Activated CD4-positive, alpha-beta T cell treated with anti-CD3 and anti-CD28 coated beads for 36 hours (primary cell): ENCODE measurements at regions of chr14 and their contacts with region 1.

Region 1: DNA sequence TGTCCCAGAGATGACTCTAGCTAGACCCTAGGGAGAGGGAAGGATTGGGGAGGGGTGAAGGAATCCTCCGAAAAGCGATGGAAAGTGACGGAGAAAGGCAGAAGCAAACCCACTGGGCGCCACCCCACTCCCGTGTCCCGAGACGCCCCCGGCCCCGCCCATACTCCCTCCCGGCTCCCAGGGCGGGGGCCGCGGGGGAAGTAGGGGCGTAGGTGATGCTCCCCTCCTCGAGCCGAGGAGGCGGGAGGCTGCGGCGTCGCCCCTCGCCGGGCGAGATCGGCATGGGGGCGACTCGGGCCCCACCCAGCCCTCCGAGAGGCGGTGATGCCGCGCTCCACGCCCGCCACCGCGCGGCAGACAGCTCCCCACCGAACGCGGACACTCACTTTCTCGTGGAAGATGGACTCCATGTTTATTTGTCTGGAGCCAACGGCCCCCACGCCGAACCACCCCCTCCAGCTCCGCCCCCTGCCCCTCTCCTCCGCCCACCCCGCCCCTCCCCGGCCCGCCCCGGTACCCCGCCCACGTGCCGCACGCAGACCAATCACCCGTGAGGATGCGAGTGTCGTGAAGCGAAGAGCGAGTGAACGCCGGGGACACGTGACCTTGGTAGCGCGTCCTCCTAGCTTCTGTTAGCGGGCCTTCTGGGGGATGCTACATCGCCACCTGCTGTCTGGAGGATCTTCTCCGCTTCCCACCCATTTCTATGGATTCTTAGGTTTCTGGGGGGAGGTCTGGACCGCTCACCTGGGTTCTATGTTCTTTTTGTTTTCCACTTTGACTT is at the start of gene ATXN3:
- DNase-seq: peak; percentile 98
- ATAC-seq: peak; percentile 97
- H3K4me3 Mint-ChIP-seq: peak within 1 kb of the TSS; percentile 90
- H3K27ac Mint-ChIP-seq: peak within 1 kb of the TSS; percentile 92
- H3K4me1 Mint-ChIP-seq: peaks cover 42% of the 10 kb centered on the region
- H3K27me3 Mint-ChIP-seq: no peaks in the 10 kb centered on the region
- total RNA-seq, gene ATXN3: 32.7 to 36.0 TPM

Region 2: DNA sequence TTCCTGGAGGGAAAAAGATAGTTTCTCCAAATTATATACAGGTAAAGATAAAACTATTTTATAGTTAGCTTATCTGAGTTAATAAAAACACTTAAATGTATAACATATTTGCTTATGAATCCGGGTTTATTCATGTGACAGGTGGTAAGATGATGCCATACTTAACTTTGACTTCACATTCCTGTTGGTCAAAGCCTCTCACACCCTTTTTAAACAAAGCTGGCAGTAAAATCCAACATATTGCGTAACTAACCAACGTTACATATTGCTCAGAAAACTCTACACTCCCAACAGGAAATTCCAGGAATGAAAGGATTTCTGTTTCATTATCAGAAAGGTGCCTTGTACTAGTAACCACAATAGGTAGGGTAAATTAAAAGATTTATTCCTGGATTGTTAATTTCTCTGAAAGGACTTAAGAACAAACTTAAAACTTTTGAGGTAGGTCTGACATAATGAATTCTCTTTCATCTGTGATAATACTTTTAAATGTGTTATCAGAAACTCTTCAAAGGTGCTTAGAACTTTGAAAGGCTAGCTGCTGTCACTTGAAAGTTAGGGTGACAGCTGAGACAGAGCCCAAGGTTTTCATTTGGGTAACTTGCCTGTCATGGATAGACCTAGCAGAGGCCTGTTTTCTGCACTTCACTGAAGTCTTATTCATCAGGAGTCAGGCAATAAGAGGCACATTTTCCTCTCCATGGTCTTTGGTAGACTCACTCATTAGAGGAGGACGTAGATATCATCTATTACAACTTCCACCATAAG is 350.6 kb before region 1 on chr14:
- CTCF ChIA-PET with region 1: no interaction called
- POLR2A ChIA-PET with region 1: no interaction called
- intact Hi-C with region 1: no loop called
- DNase-seq: no peak
- ATAC-seq: no peak
- H3K4me3 Mint-ChIP-seq: no peak overlapping the region
- H3K27ac Mint-ChIP-seq: no peak overlapping the region
- H3K4me1 Mint-ChIP-seq: no peaks in the 10 kb centered on the region
- H3K27me3 Mint-ChIP-seq: no peaks in the 10 kb centered on the region

Region 3: DNA sequence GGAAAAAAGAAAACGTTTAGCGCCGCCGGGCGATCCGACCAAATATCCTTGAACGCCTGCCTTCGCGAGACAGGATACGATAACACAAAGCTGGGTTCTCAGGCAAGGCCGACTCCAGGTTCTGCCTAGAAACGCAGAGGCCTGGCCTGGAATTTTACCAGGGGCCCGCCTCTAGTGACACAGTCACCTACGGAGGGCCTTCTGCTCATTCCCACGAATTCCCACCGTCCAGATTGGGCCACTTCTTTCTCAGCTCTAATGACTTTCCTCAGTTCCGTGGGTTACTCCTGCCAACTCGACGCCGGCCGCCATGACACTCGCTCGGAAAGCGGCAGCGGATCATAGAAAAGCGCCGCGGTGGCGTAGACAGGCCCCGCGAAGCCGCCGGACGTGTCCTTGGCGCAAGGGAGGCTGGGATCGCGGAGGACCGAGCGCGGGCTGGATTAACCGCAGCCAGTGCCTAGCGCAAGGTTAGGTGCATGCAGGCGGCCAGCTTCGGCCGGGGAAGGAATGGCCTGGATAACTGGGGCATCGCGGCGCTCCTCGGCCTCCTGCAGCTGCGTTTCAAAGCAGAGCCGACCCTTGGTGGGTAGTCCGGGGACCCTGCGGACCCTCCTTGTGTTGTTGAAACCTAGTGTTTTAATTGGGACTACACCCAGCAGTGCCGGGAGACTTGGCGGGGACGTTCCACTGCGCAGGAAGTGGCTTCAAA is 66.5 kb before region 1 on chr14 and contains the start of gene TRIP11:
- CTCF ChIA-PET with region 1: interaction called, 5 read pairs
- POLR2A ChIA-PET with region 1: interaction called, 8 read pairs
- intact Hi-C with region 1: loop called (anchors 1 kb)
- DNase-seq: peak; percentile 98
- ATAC-seq: peak; percentile 95
- H3K4me3 Mint-ChIP-seq: peak within 1 kb of the TSS; percentile 92
- H3K27ac Mint-ChIP-seq: peak within 1 kb of the TSS; percentile 98
- H3K4me1 Mint-ChIP-seq: peaks cover 42% of the 10 kb centered on the region
- H3K27me3 Mint-ChIP-seq: no peaks in the 10 kb centered on the region
- total RNA-seq, gene TRIP11: 35.7 to 41.0 TPM

Region 4: GRCh38 chr14:92190768-92191167 is 84.4 kb after region 1 on chr14:
- CTCF ChIA-PET with region 1: no interaction called
- POLR2A ChIA-PET with region 1: no interaction called
- intact Hi-C with region 1: no loop called
- DNase-seq: no peak
- ATAC-seq: no peak
- H3K4me3 Mint-ChIP-seq: no peak overlapping the region
- H3K27ac Mint-ChIP-seq: no peak overlapping the region
- H3K4me1 Mint-ChIP-seq: no peaks in the 10 kb centered on the region
- H3K27me3 Mint-ChIP-seq: no peaks in the 10 kb centered on the region

Region 5: DNA sequence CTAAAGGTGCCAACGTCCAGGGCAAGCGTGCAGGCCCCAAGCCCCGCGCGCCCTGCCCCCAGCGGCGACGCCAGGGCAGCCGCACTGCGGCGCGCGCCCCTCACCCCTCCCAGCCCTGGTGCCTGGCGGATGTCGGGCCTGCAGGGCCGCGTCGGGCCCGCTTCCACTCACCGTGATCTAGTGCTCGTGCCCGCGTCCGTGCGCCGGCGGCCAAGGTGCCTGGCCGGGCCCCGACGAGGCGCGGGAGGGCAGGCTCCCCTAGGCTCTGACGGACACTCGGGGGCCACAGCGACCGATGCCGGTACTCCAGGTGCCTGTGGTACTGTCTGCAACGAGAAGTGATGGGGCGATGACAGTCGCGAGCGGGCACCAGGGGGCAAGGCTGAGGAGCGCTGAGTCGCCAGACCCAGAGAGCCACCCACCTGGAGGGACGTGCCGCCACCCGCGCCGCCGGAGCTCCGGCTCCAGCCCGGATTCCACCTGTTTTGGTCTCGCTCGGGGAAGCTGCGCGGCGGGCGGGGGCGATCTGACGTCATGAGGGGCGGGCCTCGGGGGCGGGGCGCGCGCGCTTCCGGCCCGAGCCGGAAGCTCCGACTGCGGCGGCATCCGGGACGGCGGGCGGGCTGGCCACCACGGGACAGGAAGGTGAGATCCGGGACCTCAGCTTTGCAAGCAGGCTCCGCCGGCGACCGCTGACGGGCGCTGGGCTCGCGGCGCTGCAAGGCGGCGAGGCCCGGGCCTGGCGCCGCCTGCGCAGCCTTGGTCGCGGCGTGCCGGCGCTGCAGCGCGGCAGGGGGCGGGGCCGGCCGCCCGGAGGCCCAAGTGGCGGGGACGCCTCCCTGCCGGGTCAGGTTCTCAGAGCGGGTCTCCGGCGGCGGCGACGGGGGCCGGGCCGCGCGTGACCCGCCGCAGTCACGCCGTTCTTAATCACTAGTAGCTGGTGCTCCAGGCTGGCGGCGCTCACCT is 1078.3 kb after region 1 on chr14 and contains the starts of genes LYSET and MOAP1:
- CTCF ChIA-PET with region 1: no interaction called
- POLR2A ChIA-PET with region 1: no interaction called
- intact Hi-C with region 1: loop called in 1 of 2 experiments (anchors 2 kb)
- DNase-seq: peak; percentile 95
- ATAC-seq: peak; percentile 90
- H3K4me3 Mint-ChIP-seq: peak within 1 kb of the TSS; percentile 91
- H3K27ac Mint-ChIP-seq: peak within 1 kb of the TSS; percentile 93
- H3K4me1 Mint-ChIP-seq: peaks cover 40% of the 10 kb centered on the region
- H3K27me3 Mint-ChIP-seq: no peaks in the 10 kb centered on the region
- total RNA-seq, gene LYSET: 9.9 to 10.2 TPM
- total RNA-seq, gene MOAP1: 11.7 to 15.9 TPM